GM12878 (cell line): ENCODE measurements at regions of chrX and their contacts with region 1.

Region 1: DNA sequence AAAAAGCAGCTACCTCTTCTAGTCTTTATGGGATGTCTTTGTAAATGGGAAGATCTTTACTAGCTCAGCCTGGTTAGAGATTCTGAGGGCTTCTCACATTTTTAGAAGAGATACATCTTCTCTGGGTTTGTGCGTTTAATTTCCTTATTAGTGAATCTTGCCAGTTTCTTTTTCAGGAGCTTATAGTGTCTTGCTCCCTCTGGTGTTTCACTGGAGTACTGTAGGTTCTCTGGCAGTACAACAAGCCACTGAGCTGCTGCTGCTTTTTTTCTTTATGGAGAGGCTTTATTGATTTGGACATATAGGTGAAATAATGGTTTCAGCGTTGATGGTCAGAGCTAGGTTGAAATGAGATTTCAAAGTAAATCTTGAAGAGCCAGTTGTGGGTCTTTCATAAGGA is 82.9 kb downstream of the LAS1L start:
- DNase-seq: no peak
- ATAC-seq: peak; percentile 75
- H3K4me3 ChIP-seq: no peak overlapping the region
- H3K27ac ChIP-seq: no peak overlapping the region
- H3K4me1 ChIP-seq: no peaks in the 10 kb centered on the region
- H3K27me3 ChIP-seq: no peaks in the 10 kb centered on the region
- CTCF ChIP-seq: peak; percentile 60 to 64 (median 63)
- EP300 ChIP-seq: no peak
- POLR2A ChIP-seq: no peak
- RAD21 ChIP-seq: peak; percentile 60

Region 2: GRCh38 chrX:64093761-64094160 is 1357.9 kb before region 1 on chrX:
- CTCF ChIA-PET with region 1: interaction called, 12 read pairs
- POLR2A ChIA-PET with region 1: no interaction called
- RAD21 ChIA-PET with region 1: interaction called, 7 read pairs
- SMC1A ChIA-PET with region 1: interaction called, 6 read pairs
- in situ Hi-C with region 1: no loop called
- intact Hi-C with region 1: loop called (anchors 5 kb)
- DNase-seq: no peak
- ATAC-seq: peak; percentile 32; the same call in 1 of the 3 replicates
- H3K4me3 ChIP-seq: no peak overlapping the region
- H3K27ac ChIP-seq: no peak overlapping the region
- H3K4me1 ChIP-seq: no peaks in the 10 kb centered on the region
- H3K27me3 ChIP-seq: no peaks in the 10 kb centered on the region
- CTCF ChIP-seq: peak in 2 of 3 experiments; percentile 40 to 46; a peak in 4 of 6 replicates
- EP300 ChIP-seq: no peak
- POLR2A ChIP-seq: no peak
- RAD21 ChIP-seq: peak; percentile 52

Region 3: GRCh38 chrX:64894454-64895038 is 557.1 kb before region 1 on chrX:
- CTCF ChIA-PET with region 1: interaction called, 3 read pairs
- POLR2A ChIA-PET with region 1: interaction called, 3 read pairs
- RAD21 ChIA-PET with region 1: no interaction called
- SMC1A ChIA-PET with region 1: no interaction called
- in situ Hi-C with region 1: loop called (anchors 10 kb)
- intact Hi-C with region 1: loop called (anchors 10 kb)
- DNase-seq: no peak
- ATAC-seq: no peak
- H3K4me3 ChIP-seq: no peak overlapping the region
- H3K27ac ChIP-seq: no peak overlapping the region
- H3K4me1 ChIP-seq: no peaks in the 10 kb centered on the region
- H3K27me3 ChIP-seq: no peaks in the 10 kb centered on the region
- CTCF ChIP-seq: peak; percentile 26 to 46 (median 32); a peak in 4 of 6 replicates
- EP300 ChIP-seq: no peak
- POLR2A ChIP-seq: no peak
- RAD21 ChIP-seq: peak; percentile 66